Activated B cell treated with CpG ODN at 0.5 μM for 24 hours (primary cell): ENCODE measurements at regions of chr9 and their contacts with region 1.

Region 1: DNA sequence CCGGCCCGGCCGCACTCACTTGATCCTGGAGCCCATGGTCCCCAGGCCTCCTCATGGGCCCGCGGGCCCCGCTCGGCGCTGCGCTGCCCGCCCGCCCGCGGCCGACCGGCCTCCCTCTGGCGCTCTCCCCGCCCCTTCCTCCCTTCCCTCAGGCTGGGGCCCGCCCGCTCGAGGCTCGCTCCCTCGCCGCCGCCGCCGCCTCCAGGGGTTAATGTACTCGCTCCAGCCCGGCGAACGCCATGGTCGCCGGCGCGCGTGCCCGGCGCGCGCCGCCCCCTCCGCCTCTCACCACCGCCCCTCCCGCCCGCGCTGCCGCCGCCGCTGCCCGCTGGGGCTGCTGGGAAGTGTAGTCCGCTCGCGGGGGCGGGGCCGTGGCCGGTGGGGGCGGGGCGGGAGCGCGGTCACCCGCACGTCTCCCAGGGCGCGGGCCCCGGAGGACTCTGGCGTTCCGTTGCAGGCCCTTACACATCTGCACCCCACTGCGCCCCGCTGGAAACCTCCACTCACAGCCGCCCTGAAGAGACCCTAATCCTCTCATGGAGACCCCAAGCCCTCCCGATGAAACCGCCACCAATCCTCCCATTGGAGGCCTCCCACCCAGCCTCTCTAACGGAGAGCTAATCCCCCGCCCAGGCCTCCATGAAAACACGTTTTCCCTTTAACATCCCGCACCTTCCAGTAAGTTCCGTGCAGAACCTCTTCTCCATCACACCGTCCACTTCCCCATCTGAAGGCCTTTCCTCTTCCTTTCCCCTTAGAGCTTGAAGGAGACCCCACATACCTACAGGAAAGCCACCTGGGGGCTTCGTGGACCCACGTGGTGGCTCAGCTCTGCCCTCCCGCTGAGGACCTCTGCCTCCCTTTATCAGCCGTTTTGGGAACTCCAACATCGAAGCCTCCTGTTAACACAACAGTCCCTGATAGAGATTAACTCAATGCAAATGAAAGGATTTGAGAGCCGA is at the start of gene DENND1A:
- DNase-seq: peak; percentile 86
- ATAC-seq: peak; percentile 92
- H3K4me3 Mint-ChIP-seq: peak within 1 kb of the TSS; percentile 85
- H3K27ac Mint-ChIP-seq: peak within 1 kb of the TSS; percentile 57
- H3K4me1 Mint-ChIP-seq: peaks cover 38% of the 10 kb centered on the region
- H3K27me3 Mint-ChIP-seq: no peaks in the 10 kb centered on the region
- CTCF ChIP-seq: no peak
- total RNA-seq, gene DENND1A: 21.8 and 25.2 TPM in 2 replicates

Region 2: DNA sequence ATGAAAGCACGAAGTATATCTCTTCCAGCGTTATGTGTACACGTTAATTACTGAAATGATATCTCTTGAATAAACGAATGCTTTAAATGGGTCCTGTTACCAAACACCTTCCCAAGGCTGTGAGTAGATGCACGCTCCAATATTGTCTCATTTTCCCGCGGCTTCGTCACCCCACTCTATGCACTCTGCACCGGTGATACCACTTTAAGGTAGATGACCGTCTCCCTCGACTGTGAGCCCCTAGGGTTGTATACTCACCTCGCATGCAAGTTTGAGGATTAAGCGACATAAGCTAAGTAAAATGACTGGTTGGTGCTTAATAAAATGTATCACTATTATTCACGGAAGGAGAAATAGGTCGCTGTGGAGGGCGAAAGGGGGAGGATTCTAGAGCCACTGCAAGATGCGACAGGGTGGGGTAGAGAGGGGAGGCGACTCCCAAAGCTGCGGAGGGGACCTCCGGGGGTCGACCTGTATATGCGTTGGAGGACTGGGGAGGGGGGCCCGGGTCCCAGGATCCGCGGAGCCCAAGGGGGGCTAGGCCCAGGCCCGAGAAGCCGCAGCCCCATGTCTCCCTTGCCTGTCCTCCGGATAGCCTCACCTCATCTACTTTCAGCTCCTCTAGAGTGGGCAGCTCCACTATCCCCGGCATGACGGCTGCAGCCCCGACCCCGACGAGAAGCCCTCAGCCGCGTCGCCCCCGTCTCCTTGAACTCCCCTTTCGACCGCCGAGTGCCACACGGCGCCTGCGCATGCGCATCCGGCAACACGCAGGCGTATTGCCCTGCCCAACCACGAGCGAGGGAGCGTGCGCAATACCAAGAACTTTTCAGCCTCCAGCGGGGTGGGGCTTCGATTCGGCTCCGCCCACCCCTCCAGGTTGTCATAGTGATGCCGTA is 1770.9 kb before region 1 on chr9 and contains the starts of genes MORN5 and NDUFA8:
- CTCF ChIA-PET with region 1: no interaction called
- POLR2A ChIA-PET with region 1: no interaction called
- intact Hi-C with region 1: loop called (anchors 5 kb)
- DNase-seq: peak; percentile 93
- ATAC-seq: peak; percentile 96
- H3K4me3 Mint-ChIP-seq: peak within 1 kb of the TSS; percentile 98
- H3K27ac Mint-ChIP-seq: peak within 1 kb of the TSS; percentile 94
- H3K4me1 Mint-ChIP-seq: peaks cover 35% of the 10 kb centered on the region
- H3K27me3 Mint-ChIP-seq: peaks cover 24% of the 10 kb centered on the region
- CTCF ChIP-seq: no peak
- total RNA-seq, gene MORN5: not detected in 2 replicates
- total RNA-seq, gene NDUFA8: 21.1 and 21.2 TPM in 2 replicates

Region 3: GRCh38 chr9:123669346-123669745 is 260.8 kb before region 1 on chr9:
- CTCF ChIA-PET with region 1: no interaction called
- POLR2A ChIA-PET with region 1: no interaction called
- intact Hi-C with region 1: loop called (anchors 10 kb)
- DNase-seq: no peak
- ATAC-seq: no peak
- H3K4me3 Mint-ChIP-seq: no peak overlapping the region
- H3K27ac Mint-ChIP-seq: no peak overlapping the region
- H3K4me1 Mint-ChIP-seq: no peaks in the 10 kb centered on the region
- H3K27me3 Mint-ChIP-seq: no peaks in the 10 kb centered on the region
- CTCF ChIP-seq: no peak

Region 4: DNA sequence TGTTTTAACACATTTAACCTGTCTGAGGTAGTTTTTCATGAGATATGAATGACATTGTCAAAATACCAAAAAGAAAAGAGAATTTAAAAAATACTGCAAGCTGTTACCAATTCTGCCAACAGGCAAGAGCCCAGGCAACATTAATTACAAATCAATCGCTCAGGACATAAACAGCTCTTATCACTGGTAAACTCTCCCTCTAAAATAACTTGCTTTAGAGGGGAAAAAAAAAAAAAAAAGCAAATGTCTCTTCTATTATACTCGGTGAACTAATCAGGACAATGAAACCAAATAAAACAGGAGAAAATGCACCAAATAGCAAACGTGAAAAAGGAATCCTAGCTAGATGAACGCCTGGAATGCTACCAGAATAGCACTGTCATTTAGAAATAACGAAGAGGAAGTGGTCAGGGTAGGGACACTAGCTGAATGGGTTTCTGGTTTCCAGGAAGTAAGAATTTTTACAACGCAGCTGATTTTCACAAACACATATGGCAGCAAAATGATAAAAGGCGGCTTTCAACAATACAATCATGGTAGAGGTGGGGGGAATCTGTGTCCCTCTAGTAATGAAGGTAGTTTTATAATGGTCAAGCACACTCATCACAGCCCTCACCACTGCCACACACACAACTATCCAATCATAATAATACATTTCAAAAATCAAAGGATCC is 95.1 kb before region 1 on chr9:
- CTCF ChIA-PET with region 1: no interaction called
- POLR2A ChIA-PET with region 1: no interaction called
- intact Hi-C with region 1: loop called (anchors 5 kb)
- DNase-seq: no peak
- ATAC-seq: peak; percentile 73
- H3K4me3 Mint-ChIP-seq: peak overlapping the region; percentile 76
- H3K27ac Mint-ChIP-seq: peak overlapping the region; percentile 61
- H3K4me1 Mint-ChIP-seq: peaks cover 26% of the 10 kb centered on the region
- H3K27me3 Mint-ChIP-seq: no peaks in the 10 kb centered on the region
- CTCF ChIP-seq: no peak

Region 5: DNA sequence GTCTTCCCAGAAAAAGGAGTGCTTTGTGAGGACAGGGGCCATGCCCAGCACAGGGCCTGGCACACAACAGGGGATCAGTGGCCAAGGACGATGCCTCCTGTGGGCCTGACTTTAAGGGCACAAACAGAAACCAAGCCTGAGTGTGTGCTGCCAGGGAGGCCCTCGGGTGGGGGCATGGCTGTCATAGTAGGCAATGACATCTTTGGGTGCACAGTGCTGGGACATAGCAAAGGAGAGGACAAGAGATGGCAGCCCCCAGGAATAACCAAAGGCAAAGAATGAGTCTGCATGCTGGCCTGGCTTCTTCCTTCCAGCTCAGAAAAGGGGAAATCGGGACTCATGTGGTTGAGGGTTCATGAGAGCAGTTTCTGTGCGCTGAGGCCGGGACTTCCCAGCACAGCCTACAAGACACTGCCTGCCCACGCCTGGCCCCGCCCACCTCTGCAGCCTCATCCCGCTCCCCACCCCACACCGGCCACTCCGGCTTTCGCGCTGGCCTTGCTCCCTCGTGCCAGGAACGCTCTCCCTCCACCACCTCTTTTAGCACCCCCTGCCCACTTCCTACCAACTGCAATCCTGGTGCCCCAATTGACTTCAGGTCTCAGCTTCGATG is 67.6 kb after region 1 on chr9:
- CTCF ChIA-PET with region 1: no interaction called
- POLR2A ChIA-PET with region 1: no interaction called
- intact Hi-C with region 1: loop called (anchors 2 kb)
- DNase-seq: peak; percentile 40
- ATAC-seq: peak; percentile 72
- H3K4me3 Mint-ChIP-seq: peak overlapping the region; percentile 89
- H3K27ac Mint-ChIP-seq: peak overlapping the region; percentile 72
- H3K4me1 Mint-ChIP-seq: peaks cover 40% of the 10 kb centered on the region
- H3K27me3 Mint-ChIP-seq: peaks cover 56% of the 10 kb centered on the region
- CTCF ChIP-seq: no peak

Region 6: DNA sequence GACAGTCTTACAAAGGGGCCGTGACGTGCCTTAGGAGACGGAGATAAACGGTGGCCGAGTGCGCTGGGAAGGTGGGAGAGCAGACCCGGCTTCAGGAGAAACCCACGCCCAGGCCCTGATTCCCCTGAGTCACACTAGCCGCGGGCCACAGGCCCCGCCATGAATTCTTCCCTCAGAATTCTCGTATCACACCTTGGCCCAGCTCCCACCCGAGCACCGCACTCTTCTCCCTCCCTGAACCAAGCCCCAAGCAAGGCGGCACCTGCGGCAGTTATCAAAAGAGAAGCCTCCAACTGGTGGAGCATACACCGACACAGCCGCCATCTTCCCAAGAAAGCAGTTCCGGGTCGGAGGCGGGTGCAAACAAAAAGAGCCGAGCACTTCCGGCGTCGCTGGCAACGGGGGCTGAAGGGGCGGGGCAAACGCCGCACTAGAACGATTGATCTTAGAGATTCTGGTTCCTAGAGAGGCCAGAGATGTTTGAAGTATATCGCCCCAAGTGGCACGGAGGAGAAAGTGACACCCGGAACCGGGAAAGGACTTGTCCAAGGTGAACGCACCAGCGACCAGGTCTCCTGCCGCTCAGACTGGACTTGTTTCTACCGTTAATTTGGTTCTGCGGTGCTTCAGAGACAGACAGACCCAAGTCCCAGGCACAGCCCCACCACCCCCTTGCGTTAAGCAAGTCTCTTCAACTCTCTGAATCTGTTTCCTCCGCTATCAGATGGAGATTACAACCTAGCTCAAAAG is 485.1 kb after region 1 on chr9 and contains the start of gene PSMB7:
- CTCF ChIA-PET with region 1: no interaction called
- POLR2A ChIA-PET with region 1: interaction called, 3 read pairs
- intact Hi-C with region 1: loop called (anchors 1 kb)
- DNase-seq: peak; percentile 91
- ATAC-seq: peak; percentile 94
- H3K4me3 Mint-ChIP-seq: peak within 1 kb of the TSS; percentile 99
- H3K27ac Mint-ChIP-seq: peak within 1 kb of the TSS; percentile 94
- H3K4me1 Mint-ChIP-seq: peaks cover 25% of the 10 kb centered on the region
- H3K27me3 Mint-ChIP-seq: no peaks in the 10 kb centered on the region
- CTCF ChIP-seq: peak; percentile 38
- total RNA-seq, gene PSMB7: 120 and 140 TPM in 2 replicates